ENCODE measurements at regions of chr17 and their contacts with region 1.

Region 1: DNA sequence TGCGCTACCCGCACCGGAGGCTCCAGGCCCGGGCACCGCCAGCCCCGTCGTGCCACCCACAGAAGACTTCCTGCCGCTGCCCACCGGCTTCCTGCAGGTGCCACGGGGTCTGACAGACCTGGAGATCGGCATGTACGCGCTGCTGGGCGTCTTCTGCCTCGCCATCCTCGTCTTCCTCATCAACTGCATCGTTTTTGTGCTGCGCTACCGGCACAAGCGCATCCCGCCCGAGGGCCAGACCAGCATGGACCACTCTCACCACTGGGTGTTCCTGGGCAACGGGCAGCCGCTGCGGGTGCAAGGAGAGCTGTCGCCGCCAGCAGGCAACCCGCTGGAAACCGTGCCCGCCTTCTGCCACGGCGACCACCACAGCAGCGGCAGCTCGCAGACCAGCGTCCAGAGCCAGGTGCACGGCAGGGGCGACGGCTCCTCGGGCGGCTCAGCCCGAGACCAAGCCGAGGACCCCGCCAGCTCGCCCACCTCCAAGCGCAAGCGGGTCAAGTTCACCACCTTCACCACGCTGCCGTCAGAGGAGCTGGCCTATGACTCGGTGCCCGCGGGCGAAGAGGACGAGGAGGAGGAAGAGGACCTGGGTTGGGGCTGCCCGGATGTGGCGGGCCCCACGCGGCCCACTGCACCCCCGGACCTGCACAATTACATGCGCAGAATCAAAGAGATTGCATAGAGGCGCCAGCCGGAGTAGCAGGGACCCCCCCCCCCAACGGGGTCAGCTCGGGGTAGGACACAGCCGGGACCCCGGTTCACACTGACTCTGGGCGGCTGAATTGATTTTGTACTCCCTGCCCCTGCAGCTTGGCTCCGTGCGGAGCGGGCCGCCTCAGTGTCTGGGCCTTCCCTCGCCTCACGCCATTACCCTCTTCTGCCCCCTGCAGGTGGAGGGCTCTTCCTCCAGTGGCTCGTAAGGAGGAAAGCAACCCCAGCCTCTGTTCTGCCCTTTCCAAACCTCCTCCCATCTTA is 58.5 kb downstream of the TMEM132E start:
- DNase-seq: peak; percentile 82 to 91 (median 88)
- H3K4me3 ChIP-seq: peak overlapping the region in 5 of 7 experiments; percentile 9 to 67 (median 58)
- H3K27ac ChIP-seq: no peak overlapping the region
- H3K4me1 ChIP-seq: peaks cover 0 to 20% (median 13%) of the 10 kb centered on the region in 4 experiments
- H3K27me3 ChIP-seq: peaks cover 0 to 87% (median 26%) of the 10 kb centered on the region in 5 experiments

Region 2: DNA sequence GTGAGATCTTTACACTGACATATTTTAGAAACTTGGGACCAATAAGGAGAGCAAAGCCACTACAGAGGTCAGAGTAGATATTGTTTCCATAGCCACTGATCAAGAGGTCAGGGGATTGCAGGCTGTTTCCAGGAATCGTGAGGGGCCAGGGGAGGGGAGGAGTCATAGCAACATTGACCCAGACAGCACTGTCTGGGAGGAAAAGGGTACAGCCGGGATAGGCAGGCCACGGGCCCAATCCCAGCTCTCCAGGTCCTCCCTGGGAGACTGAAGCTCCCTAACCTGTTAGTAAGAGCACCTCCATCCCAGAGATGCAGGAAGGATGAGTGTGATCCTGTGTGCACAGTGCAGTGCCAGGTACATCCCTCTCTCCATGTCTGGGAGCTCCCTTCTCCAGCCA is 106.9 kb before region 1 on chr17:
- CTCF ChIA-PET with region 1: no interaction called
- POLR2A ChIA-PET with region 1: no interaction called
- DNase-seq: no peak
- H3K4me3 ChIP-seq: no peak overlapping the region
- H3K27ac ChIP-seq: no peak overlapping the region
- H3K4me1 ChIP-seq: no peaks in the 10 kb centered on the region
- H3K27me3 ChIP-seq: peaks cover 0 to 24% (median 7%) of the 10 kb centered on the region in 5 experiments

Region 3: GRCh38 chr17:34542700-34543336 is 95.0 kb before region 1 on chr17:
- CTCF ChIA-PET with region 1: interaction called, 17 read pairs
- POLR2A ChIA-PET with region 1: no interaction called
- DNase-seq: peak; percentile 28 to 40 (median 29)
- H3K4me3 ChIP-seq: no peak overlapping the region
- H3K27ac ChIP-seq: no peak overlapping the region
- H3K4me1 ChIP-seq: no peaks in the 10 kb centered on the region
- H3K27me3 ChIP-seq: peaks cover 0 to 53% (median 11%) of the 10 kb centered on the region in 5 experiments

Region 4: DNA sequence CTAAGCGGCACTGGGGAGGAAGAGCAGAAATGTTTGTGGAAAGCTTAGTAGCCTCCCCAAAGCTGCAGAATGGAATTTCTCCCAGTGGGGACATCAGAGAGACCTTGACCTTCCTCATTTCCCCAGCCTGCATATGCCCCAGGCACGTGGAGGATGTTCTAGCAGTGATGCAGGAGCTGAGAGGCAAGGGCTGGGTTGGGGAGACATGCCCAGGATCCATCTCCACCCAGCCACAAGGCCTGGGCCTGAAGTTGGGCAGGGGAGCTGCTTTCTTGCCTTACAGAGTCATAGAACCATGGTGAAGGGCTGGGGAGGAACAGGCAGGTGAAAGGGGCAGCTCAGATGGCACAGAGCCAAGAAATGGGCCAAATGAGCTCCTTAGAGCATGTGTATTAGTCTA is 45.6 kb after region 1 on chr17:
- CTCF ChIA-PET with region 1: no interaction called
- POLR2A ChIA-PET with region 1: no interaction called
- DNase-seq: no peak
- H3K4me3 ChIP-seq: no peak overlapping the region
- H3K27ac ChIP-seq: no peak overlapping the region
- H3K4me1 ChIP-seq: no peaks in the 10 kb centered on the region
- H3K27me3 ChIP-seq: peaks cover 0 to 12% (median 0%) of the 10 kb centered on the region in 5 experiments

Measured in common myeloid progenitor, CD34-positive (primary cell).